Activated naive CD8-positive, alpha-beta T cell treated with anti-CD3 and anti-CD28 coated beads, Interleukin-2, amount 10 ng/mL, durations not matched to agents 7 days and 5 days (primary cell): ENCODE measurements at regions of chr11 and their contacts with region 1.

Region 1: GRCh38 chr11:67303132-67303834 is at the start of gene SSH3:
- DNase-seq: peak; percentile 76
- ATAC-seq: peak; percentile 79
- H3K4me3 Mint-ChIP-seq: peak within 1 kb of the TSS; percentile 68
- H3K27ac Mint-ChIP-seq: peak within 1 kb of the TSS; percentile 75
- H3K4me1 Mint-ChIP-seq: peaks cover 8% of the 10 kb centered on the region
- H3K27me3 Mint-ChIP-seq: no peaks in the 10 kb centered on the region
- total RNA-seq, gene SSH3: 24.6 to 27.0 TPM

Region 2: GRCh38 chr11:67099831-67100324 is 203.4 kb before region 1 on chr11:
- POLR2A ChIA-PET with region 1: no interaction called
- DNase-seq: no peak
- ATAC-seq: peak; percentile 40
- H3K4me3 Mint-ChIP-seq: peak overlapping the region; percentile 31
- H3K27ac Mint-ChIP-seq: peak overlapping the region; percentile 84
- H3K4me1 Mint-ChIP-seq: peaks cover 31% of the 10 kb centered on the region
- H3K27me3 Mint-ChIP-seq: no peaks in the 10 kb centered on the region

Region 3: GRCh38 chr11:67277231-67277961 is 25.9 kb before region 1 on chr11:
- POLR2A ChIA-PET with region 1: interaction called, 11 read pairs
- DNase-seq: peak; percentile 90
- ATAC-seq: peak; percentile 87
- H3K4me3 Mint-ChIP-seq: peak overlapping the region; percentile 82
- H3K27ac Mint-ChIP-seq: peak overlapping the region; percentile 97
- H3K4me1 Mint-ChIP-seq: peaks cover 45% of the 10 kb centered on the region
- H3K27me3 Mint-ChIP-seq: no peaks in the 10 kb centered on the region

Region 4: GRCh38 chr11:67288452-67289225 is 14.6 kb before region 1 on chr11:
- POLR2A ChIA-PET with region 1: interaction called, 66 read pairs
- DNase-seq: peak; percentile 96
- ATAC-seq: peak; percentile 68
- H3K4me3 Mint-ChIP-seq: peak overlapping the region; percentile 79
- H3K27ac Mint-ChIP-seq: peak overlapping the region; percentile 96
- H3K4me1 Mint-ChIP-seq: peaks cover 40% of the 10 kb centered on the region
- H3K27me3 Mint-ChIP-seq: no peaks in the 10 kb centered on the region

Region 5: DNA sequence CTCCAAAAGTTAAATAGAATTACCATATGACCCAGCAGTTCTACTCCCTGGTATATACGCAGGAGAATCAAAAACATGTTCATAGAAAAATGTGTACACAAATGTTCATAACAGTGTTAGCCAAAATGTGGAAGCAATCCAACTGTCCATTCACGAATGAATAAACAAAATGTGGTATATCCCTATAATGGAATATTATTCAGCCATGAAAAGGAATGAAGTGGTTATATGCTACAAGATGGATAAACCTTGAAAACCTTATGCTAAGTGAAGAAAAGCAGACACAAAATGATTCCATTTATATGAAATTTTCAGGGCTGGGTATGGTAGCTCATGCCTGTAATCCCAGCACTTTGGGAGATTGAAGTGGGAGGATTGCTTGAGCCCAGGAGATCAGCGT is 34.0 kb after region 1 on chr11:
- POLR2A ChIA-PET with region 1: no interaction called
- DNase-seq: no peak
- ATAC-seq: no peak
- H3K4me3 Mint-ChIP-seq: no peak overlapping the region
- H3K27ac Mint-ChIP-seq: no peak overlapping the region
- H3K4me1 Mint-ChIP-seq: no peaks in the 10 kb centered on the region
- H3K27me3 Mint-ChIP-seq: no peaks in the 10 kb centered on the region